ENCODE measurements at regions of chr3 and their contacts with region 1.

Region 1: GRCh38 chr3:42247576-42248027 is 18.4 kb downstream of the CCK start:
- DNase-seq: peak; percentile 69
- ATAC-seq: peak; percentile 45
- H3K4me3 ChIP-seq: no peak overlapping the region
- H3K4me3 Mint-ChIP-seq: no peak overlapping the region
- H3K27ac ChIP-seq: no peak overlapping the region
- H3K27ac Mint-ChIP-seq: no peak overlapping the region
- H3K4me1 ChIP-seq: peaks cover 4 to 6% of the 10 kb centered on the region in 2 donors
- H3K4me1 Mint-ChIP-seq: peaks cover 7% of the 10 kb centered on the region
- H3K27me3 ChIP-seq: peaks cover 0 to 8% (median 0%) of the 10 kb centered on the region in 4 experiments
- H3K27me3 Mint-ChIP-seq: peaks cover 22% of the 10 kb centered on the region
- CTCF ChIP-seq: peak; percentile 83

Region 2: DNA sequence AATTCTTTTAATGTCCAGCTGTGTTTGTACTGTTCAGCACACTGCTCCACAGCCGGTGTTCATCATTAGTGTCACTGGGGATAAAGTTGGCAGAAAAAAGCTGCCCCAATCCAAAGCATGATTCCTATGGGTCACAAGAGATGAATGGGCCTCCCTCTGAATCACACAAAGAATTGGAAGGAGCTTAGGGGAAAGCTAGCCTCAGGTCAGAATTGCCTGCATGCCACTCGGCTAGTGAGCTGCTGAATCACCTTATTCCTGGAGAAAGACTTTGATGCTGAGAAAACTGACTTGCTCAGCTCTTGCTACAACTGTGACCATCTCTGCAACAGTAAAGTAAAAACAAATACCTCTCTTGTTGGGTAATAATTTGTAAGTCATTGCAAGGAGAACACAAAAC is 14.9 kb after region 1 on chr3:
- CTCF ChIA-PET with region 1: interaction called, 10 read pairs
- POLR2A ChIA-PET with region 1: no interaction called
- intact Hi-C with region 1: no loop called
- DNase-seq: no peak
- ATAC-seq: no peak
- H3K4me3 ChIP-seq: no peak overlapping the region
- H3K4me3 Mint-ChIP-seq: no peak overlapping the region
- H3K27ac ChIP-seq: no peak overlapping the region
- H3K27ac Mint-ChIP-seq: no peak overlapping the region
- H3K4me1 ChIP-seq: peaks cover 13 to 29% of the 10 kb centered on the region in 2 donors
- H3K4me1 Mint-ChIP-seq: peaks cover 11% of the 10 kb centered on the region
- H3K27me3 ChIP-seq: peaks cover 0 to 58% (median 24%) of the 10 kb centered on the region in 4 experiments
- H3K27me3 Mint-ChIP-seq: peaks cover 58% of the 10 kb centered on the region
- CTCF ChIP-seq: no peak

Region 3: DNA sequence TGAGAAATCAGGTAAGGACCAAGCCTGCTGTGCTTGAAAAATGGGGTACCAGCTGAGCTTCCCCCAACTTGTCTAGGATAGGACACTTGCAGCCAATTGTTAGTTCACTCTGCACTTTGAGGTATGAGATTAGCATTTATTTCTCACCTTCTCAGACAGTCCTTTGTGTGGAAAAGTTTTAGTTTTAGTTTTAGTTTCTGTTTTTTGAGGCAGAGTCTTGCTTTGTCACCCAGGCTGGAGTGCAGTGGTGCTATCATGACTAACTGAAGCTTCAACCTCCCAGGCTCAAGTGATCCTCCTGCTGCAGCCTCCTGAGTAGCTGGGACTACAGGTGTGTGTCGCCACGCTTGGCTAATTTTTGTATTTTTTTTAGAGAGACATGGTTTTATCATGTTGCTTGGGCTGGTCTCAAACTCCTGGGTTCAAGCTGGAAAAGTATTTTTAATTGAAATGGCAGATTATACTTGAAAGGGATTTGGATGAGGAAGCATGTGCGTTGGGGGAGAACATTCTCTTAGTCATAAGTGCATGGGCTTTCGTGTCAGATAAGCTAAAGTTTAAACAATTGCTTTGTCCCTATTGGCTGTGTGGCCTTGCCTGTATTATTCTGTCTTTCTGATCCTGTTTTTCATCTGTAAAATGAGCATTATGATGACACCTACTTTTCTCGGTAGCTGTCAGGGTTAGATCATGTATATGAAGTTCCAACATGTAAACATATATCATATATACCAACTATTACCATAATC is 43.5 kb after region 1 on chr3:
- CTCF ChIA-PET with region 1: no interaction called
- POLR2A ChIA-PET with region 1: no interaction called
- intact Hi-C with region 1: no loop called
- DNase-seq: no peak
- ATAC-seq: no peak
- H3K4me3 ChIP-seq: no peak overlapping the region
- H3K4me3 Mint-ChIP-seq: no peak overlapping the region
- H3K27ac ChIP-seq: no peak overlapping the region
- H3K27ac Mint-ChIP-seq: no peak overlapping the region
- H3K4me1 ChIP-seq: peaks cover 0 to 5% of the 10 kb centered on the region in 2 donors
- H3K4me1 Mint-ChIP-seq: peaks cover 4% of the 10 kb centered on the region
- H3K27me3 ChIP-seq: peaks cover 0 to 17% (median 2%) of the 10 kb centered on the region in 4 experiments
- H3K27me3 Mint-ChIP-seq: peaks cover 29% of the 10 kb centered on the region
- CTCF ChIP-seq: no peak

Region 4: GRCh38 chr3:42410370-42411131 is 162.9 kb after region 1 on chr3 and contains the start of gene LYZL4:
- CTCF ChIA-PET with region 1: no interaction called
- POLR2A ChIA-PET with region 1: no interaction called
- intact Hi-C with region 1: no loop called
- DNase-seq: no peak
- ATAC-seq: no peak
- H3K4me3 ChIP-seq: no peak within 1 kb of the TSS
- H3K4me3 Mint-ChIP-seq: no peak within 1 kb of the TSS
- H3K27ac ChIP-seq: no peak within 1 kb of the TSS
- H3K27ac Mint-ChIP-seq: no peak within 1 kb of the TSS
- H3K4me1 ChIP-seq: no peaks in the 10 kb centered on the region
- H3K4me1 Mint-ChIP-seq: no peaks in the 10 kb centered on the region
- H3K27me3 ChIP-seq: peaks cover 0 to 10% (median 0%) of the 10 kb centered on the region in 4 experiments
- H3K27me3 Mint-ChIP-seq: peaks cover 24% of the 10 kb centered on the region
- CTCF ChIP-seq: no peak
- total RNA-seq, gene LYZL4: not detected in 2 replicates

Region 5: DNA sequence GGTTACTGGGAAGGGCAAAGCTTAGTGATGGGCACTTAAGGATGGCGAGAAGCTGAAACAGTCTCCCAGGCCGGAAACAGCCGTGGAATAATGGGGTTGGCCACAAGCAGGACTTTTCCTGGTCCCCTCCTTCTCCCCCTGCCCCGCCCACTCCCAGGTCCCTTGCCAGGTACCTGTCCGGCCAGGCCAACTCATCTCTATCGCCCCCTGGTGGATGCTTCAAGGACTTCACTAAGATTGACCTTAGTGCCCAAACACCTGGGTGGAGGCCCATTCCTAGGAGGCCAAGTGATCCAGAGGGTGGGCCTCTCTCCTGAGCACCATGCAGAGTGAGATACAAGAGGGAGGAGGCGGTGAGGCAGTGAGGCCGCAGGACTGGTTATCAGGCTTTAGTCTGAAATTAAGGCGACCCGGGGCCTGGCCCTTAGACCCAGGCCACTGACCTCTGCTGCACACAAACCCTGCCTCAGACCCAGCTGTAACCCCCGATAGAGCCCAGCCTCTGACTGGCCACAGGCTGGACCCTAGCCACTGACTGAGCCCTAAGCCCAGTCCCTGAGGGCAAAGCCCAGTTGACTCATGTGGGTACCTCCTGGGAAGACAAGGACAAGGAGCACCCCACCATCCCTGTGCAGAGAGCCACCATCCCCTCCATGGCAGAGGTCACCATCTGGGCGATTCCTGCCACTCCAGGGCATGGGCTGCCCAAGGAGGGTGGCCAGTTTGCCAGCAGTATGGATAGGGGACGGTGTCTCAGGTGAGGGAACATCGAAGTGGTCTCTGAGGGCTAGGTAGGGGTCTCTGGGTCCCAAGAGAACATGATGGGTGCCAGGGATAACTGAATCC is 292.5 kb after region 1 on chr3:
- CTCF ChIA-PET with region 1: interaction called, 10 read pairs
- POLR2A ChIA-PET with region 1: no interaction called
- intact Hi-C with region 1: no loop called
- DNase-seq: peak; percentile 71
- ATAC-seq: peak; percentile 65
- H3K4me3 ChIP-seq: no peak overlapping the region
- H3K4me3 Mint-ChIP-seq: no peak overlapping the region
- H3K27ac ChIP-seq: no peak overlapping the region
- H3K27ac Mint-ChIP-seq: no peak overlapping the region
- H3K4me1 ChIP-seq: peaks cover 0 to 4% of the 10 kb centered on the region in 2 donors
- H3K4me1 Mint-ChIP-seq: no peaks in the 10 kb centered on the region
- H3K27me3 ChIP-seq: no peaks in the 10 kb centered on the region
- H3K27me3 Mint-ChIP-seq: no peaks in the 10 kb centered on the region
- CTCF ChIP-seq: peak; percentile 83

Region 6: DNA sequence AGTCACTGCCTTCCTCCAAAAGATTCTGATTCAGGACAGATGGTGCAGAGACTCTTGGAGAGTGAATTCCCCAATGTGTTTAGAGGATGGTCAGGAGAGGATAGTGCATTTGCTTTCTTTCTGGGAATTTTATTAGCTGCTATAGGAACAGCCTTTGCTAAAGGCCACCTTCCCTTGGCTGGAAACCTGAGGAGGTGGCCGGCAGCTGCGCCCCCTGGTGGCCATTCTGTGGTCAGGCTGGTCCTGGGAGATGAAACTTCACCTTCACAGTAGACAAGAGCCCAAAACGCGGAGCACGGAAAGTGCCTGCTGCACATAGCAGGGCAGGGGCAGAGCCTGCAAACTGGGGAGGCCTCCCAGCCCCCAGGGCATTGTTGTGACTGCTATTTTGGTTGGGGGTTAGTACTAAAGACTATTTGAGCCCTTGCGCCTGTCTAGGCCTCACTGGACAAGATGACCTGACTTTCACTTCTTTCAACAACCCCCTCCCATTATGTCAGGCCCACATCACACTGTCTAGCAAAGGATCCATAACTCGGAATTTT is 299.9 kb after region 1 on chr3:
- CTCF ChIA-PET with region 1: interaction called, 8 read pairs
- POLR2A ChIA-PET with region 1: no interaction called
- intact Hi-C with region 1: loop called (anchors 1 kb)
- DNase-seq: peak; percentile 74
- ATAC-seq: peak; percentile 53
- H3K4me3 ChIP-seq: no peak overlapping the region
- H3K4me3 Mint-ChIP-seq: no peak overlapping the region
- H3K27ac ChIP-seq: no peak overlapping the region
- H3K27ac Mint-ChIP-seq: no peak overlapping the region
- H3K4me1 ChIP-seq: no peaks in the 10 kb centered on the region
- H3K4me1 Mint-ChIP-seq: no peaks in the 10 kb centered on the region
- H3K27me3 ChIP-seq: no peaks in the 10 kb centered on the region
- H3K27me3 Mint-ChIP-seq: no peaks in the 10 kb centered on the region
- CTCF ChIP-seq: peak; percentile 97

Measured in B cell (primary cell).